ENCODE measurements at regions of chr19 and their contacts with region 1.

Region 1: GRCh38 chr19:3572132-3572854 is 451 bp upstream of the HMG20B start:
- DNase-seq: peak; percentile 98 to 99
- ATAC-seq: peak; percentile 93 to 99 (median 94)
- H3K4me3 ChIP-seq: peak overlapping the region; percentile 49
- H3K4me3 Mint-ChIP-seq: peak overlapping the region; percentile 88
- H3K27ac ChIP-seq: peak overlapping the region; percentile 67
- H3K27ac Mint-ChIP-seq: peak overlapping the region; percentile 61 to 85
- H3K4me1 ChIP-seq: peaks cover 26% of the 10 kb centered on the region
- H3K4me1 Mint-ChIP-seq: peaks cover 7 to 25% of the 10 kb centered on the region in 2 donors
- H3K27me3 ChIP-seq: no peaks in the 10 kb centered on the region
- H3K27me3 Mint-ChIP-seq: no peaks in the 10 kb centered on the region
- CTCF ChIP-seq: no peak

Region 2: GRCh38 chr19:3505598-3506383 is 66.5 kb before region 1 on chr19 and contains the start of gene FZR1:
- intact Hi-C with region 1: loop called (anchors 2 kb)
- DNase-seq: peak; percentile 99 to 100
- ATAC-seq: peak; percentile 84 to 98 (median 88)
- H3K4me3 ChIP-seq: peak within 1 kb of the TSS; percentile 84
- H3K4me3 Mint-ChIP-seq: peak within 1 kb of the TSS; percentile 94
- H3K27ac ChIP-seq: peak within 1 kb of the TSS; percentile 89
- H3K27ac Mint-ChIP-seq: peak within 1 kb of the TSS; percentile 97 to 98
- H3K4me1 ChIP-seq: peaks cover 55% of the 10 kb centered on the region
- H3K4me1 Mint-ChIP-seq: peaks cover 43 to 45% of the 10 kb centered on the region in 2 donors
- H3K27me3 ChIP-seq: no peaks in the 10 kb centered on the region
- H3K27me3 Mint-ChIP-seq: no peaks in the 10 kb centered on the region
- CTCF ChIP-seq: no peak
- total RNA-seq, gene FZR1: 89.1 to 98.3 (median 91.4) TPM

Region 3: DNA sequence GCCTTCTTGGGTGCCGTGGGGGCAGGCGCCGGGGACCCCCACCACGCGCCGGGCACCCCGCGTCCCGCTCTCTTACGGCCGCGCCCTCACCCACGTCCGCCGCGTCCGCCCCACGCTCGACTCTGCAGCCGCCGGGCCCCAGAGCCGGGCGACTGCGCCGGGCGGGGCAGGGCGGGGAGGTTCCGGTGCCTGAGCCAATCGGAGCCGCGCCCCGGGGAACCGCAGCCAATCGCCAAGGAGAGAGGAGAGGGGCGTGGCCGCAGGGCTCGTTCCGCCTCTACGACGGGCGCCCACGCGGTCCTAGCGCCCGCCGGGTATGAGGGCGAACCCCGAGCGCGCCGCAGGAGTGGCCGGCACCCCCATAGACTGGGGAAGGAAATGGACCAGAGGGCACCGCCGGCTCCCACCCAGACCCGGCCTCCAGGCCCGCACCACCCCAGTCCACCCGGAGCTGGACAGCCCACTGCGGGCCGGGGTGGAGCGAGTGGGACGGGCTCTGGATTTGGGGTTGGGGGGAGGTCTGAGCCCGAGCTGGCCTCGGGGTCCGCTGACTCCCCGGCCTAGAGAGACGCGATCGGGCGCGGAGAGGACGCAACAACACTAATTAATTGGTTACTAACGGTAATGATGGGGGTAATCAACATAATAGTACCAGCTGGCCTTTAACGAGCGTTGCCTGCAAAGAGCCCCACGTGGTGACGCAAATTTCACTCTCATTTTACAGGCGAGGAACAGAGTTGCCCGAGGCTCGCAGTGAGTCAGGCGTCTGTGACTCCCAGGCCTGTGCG is 14.6 kb before region 1 on chr19 and contains the start of gene MFSD12:
- intact Hi-C with region 1: loop called (anchors 1 kb)
- DNase-seq: peak; percentile 97
- ATAC-seq: peak; percentile 85 to 97 (median 92)
- H3K4me3 ChIP-seq: peak within 1 kb of the TSS; percentile 89
- H3K4me3 Mint-ChIP-seq: peak within 1 kb of the TSS; percentile 96
- H3K27ac ChIP-seq: peak within 1 kb of the TSS; percentile 64
- H3K27ac Mint-ChIP-seq: peak within 1 kb of the TSS; percentile 83 to 98
- H3K4me1 ChIP-seq: peaks cover 50% of the 10 kb centered on the region
- H3K4me1 Mint-ChIP-seq: peaks cover 21 to 37% of the 10 kb centered on the region in 2 donors
- H3K27me3 ChIP-seq: no peaks in the 10 kb centered on the region
- H3K27me3 Mint-ChIP-seq: no peaks in the 10 kb centered on the region
- CTCF ChIP-seq: peak; percentile 5
- total RNA-seq, gene MFSD12: 29.8 to 34.5 (median 33.6) TPM

Region 4: GRCh38 chr19:3626473-3627350 is 54.4 kb after region 1 on chr19 and contains the start of gene CACTIN:
- intact Hi-C with region 1: loop called (anchors 2 kb)
- DNase-seq: peak; percentile 97 to 99
- ATAC-seq: peak; percentile 96 to 99 (median 97)
- H3K4me3 ChIP-seq: peak within 1 kb of the TSS; percentile 72
- H3K4me3 Mint-ChIP-seq: peak within 1 kb of the TSS; percentile 99
- H3K27ac ChIP-seq: peak within 1 kb of the TSS; percentile 94
- H3K27ac Mint-ChIP-seq: peak within 1 kb of the TSS; percentile 96 to 99
- H3K4me1 ChIP-seq: peaks cover 27% of the 10 kb centered on the region
- H3K4me1 Mint-ChIP-seq: peaks cover 17 to 29% of the 10 kb centered on the region in 2 donors
- H3K27me3 ChIP-seq: no peaks in the 10 kb centered on the region
- H3K27me3 Mint-ChIP-seq: no peaks in the 10 kb centered on the region
- CTCF ChIP-seq: no peak
- total RNA-seq, gene CACTIN: 33.6 to 42.2 (median 40.8) TPM

Region 5: DNA sequence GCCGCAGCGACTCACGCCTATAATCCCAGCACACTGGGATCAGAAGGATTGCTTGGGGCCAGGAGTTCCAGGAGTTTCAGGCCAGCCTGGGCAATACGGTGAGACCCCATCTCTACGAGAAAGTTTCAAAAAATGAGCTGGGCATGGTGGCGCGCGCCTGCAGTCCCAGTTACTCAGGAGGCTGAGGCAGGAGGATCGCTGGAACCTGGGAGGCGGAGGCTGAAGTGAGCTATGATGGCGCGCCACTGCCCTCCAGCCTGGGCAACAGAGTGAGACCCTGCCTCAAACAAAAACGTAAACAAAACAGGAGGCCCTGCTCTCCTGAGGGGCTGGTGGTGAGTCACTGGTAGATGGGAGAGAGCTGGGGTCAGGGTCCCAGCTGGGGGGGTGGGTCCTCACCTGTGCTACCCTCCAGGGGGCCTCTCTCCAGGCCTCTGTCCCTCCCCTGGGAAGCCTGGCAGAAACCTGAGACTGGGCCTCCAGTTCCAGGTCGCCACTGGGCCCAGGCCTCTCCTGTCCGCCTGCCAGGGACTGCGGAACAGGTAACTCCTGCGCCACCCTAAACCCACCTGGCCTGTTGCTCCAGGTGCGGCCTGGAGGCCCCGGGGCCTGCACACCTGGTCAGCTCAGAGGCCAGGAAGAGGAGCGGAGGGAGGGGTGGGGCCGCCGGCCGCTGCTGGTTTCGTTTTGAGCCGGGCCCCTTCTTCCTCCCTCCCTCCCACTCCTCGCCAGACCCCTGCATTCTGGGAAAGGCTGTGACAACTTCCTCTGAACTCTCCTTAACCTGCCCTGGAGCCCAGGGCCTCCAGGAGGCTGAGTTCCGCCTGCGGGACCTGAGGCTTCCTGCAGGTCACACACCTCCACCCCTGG is 511.6 kb after region 1 on chr19:
- intact Hi-C with region 1: no loop called
- DNase-seq: peak in 1 of 2 donors; percentile 59
- ATAC-seq: peak; percentile 38 to 63 (median 45)
- H3K4me3 ChIP-seq: peak overlapping the region; percentile 21
- H3K4me3 Mint-ChIP-seq: peak overlapping the region; percentile 89
- H3K27ac ChIP-seq: peak overlapping the region; percentile 82
- H3K27ac Mint-ChIP-seq: peak overlapping the region; percentile 67 to 88
- H3K4me1 ChIP-seq: peaks cover 86% of the 10 kb centered on the region
- H3K4me1 Mint-ChIP-seq: peaks cover 29 to 39% of the 10 kb centered on the region in 2 donors
- H3K27me3 ChIP-seq: no peaks in the 10 kb centered on the region
- H3K27me3 Mint-ChIP-seq: no peaks in the 10 kb centered on the region
- CTCF ChIP-seq: no peak